Activated naive CD4-positive, alpha-beta T cell treated with anti-CD3 and anti-CD28 coated beads for 36 hours (primary cell): ENCODE measurements at regions of chr2 and their contacts with region 1.

Region 1: GRCh38 chr2:230824406-230824978 is 40.2 kb upstream of the ITM2C start:
- DNase-seq: peak; percentile 59
- H3K4me3 Mint-ChIP-seq: no peak overlapping the region
- H3K27ac Mint-ChIP-seq: no peak overlapping the region
- H3K4me1 Mint-ChIP-seq: peaks cover 5% of the 10 kb centered on the region
- H3K27me3 Mint-ChIP-seq: peaks cover 27% of the 10 kb centered on the region

Region 2: GRCh38 chr2:230286048-230286447 is 538.4 kb before region 1 on chr2:
- CTCF ChIA-PET with region 1: no interaction called
- intact Hi-C with region 1: no loop called
- DNase-seq: no peak
- H3K4me3 Mint-ChIP-seq: no peak overlapping the region
- H3K27ac Mint-ChIP-seq: no peak overlapping the region
- H3K4me1 Mint-ChIP-seq: peaks cover 7% of the 10 kb centered on the region
- H3K27me3 Mint-ChIP-seq: no peaks in the 10 kb centered on the region

Region 3: GRCh38 chr2:230842473-230842872 is 18.0 kb after region 1 on chr2:
- CTCF ChIA-PET with region 1: interaction called, 29 read pairs
- intact Hi-C with region 1: no loop called
- DNase-seq: no peak
- H3K4me3 Mint-ChIP-seq: no peak overlapping the region
- H3K27ac Mint-ChIP-seq: no peak overlapping the region
- H3K4me1 Mint-ChIP-seq: peaks cover 12% of the 10 kb centered on the region
- H3K27me3 Mint-ChIP-seq: peaks cover 4% of the 10 kb centered on the region

Region 4: DNA sequence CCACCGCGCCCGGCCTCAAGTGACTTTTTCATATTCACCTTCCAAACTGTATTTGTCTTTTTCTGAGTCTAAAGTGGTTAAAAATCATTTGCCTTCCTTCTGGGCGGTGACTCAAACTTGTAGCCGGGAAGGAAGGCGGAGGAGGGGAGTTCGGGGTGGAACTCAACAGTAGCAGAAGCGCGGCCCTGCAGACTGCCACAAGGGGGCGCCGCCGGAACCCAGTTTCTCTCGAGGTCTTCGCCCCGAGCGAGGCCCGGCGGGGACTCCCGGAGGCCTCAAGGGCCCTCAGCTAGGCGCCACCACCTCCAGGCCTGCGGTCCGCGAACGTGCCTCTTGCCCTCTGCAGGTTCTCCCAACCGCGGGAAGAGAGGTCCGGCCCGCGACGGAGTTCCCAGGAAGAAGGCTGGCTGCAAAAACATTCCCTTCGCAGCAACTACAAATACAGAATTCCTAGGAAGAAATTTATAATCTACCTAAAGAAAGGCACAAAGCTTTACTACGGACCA is 23.4 kb after region 1 on chr2:
- CTCF ChIA-PET with region 1: interaction called, 29 read pairs
- intact Hi-C with region 1: loop called (anchors 1 kb)
- DNase-seq: peak; percentile 97
- H3K4me3 Mint-ChIP-seq: no peak overlapping the region
- H3K27ac Mint-ChIP-seq: peak overlapping the region; percentile 31
- H3K4me1 Mint-ChIP-seq: peaks cover 14% of the 10 kb centered on the region
- H3K27me3 Mint-ChIP-seq: peaks cover 13% of the 10 kb centered on the region

Region 5: DNA sequence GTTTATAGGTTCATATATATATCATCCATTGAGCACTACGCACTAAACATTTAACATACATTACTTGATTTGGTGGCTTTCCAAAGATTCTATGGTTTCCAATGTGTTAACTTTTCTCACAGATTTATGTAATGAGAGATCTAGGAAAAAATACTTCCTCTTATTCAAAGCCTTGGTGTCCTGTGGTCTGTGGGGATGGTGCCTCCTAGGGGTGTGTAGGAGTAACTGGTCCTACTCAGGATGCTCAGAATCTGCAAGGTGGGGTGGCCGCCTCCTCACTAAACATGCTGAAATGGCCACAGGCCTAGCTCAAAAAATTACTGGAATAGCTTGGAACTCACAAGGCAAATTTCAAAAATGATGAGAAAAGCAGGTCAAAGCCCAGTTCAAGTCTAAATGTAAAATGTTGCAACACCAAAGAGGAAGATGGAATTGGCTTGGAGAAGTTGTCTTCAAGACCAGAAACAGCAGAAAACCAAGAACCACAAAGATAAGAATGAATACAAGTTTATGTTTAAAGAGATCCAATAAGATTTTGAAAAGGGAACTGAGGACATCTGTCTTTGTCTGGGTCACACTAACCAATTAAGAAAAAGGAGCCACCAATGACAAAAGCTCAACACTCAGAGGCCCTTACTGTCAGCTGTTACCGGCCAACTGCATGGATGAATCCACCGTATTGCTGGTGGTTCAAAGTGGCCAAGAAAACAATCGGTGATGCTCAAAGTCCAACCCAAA is 89.1 kb after region 1 on chr2:
- CTCF ChIA-PET with region 1: interaction called, 12 read pairs
- intact Hi-C with region 1: loop called (anchors 1 kb)
- DNase-seq: peak; percentile 58
- H3K4me3 Mint-ChIP-seq: no peak overlapping the region
- H3K27ac Mint-ChIP-seq: no peak overlapping the region
- H3K4me1 Mint-ChIP-seq: peaks cover 28% of the 10 kb centered on the region
- H3K27me3 Mint-ChIP-seq: peaks cover 1% of the 10 kb centered on the region